ENCODE measurements at regions of chr1 and their contacts with region 1.

Region 1: DNA sequence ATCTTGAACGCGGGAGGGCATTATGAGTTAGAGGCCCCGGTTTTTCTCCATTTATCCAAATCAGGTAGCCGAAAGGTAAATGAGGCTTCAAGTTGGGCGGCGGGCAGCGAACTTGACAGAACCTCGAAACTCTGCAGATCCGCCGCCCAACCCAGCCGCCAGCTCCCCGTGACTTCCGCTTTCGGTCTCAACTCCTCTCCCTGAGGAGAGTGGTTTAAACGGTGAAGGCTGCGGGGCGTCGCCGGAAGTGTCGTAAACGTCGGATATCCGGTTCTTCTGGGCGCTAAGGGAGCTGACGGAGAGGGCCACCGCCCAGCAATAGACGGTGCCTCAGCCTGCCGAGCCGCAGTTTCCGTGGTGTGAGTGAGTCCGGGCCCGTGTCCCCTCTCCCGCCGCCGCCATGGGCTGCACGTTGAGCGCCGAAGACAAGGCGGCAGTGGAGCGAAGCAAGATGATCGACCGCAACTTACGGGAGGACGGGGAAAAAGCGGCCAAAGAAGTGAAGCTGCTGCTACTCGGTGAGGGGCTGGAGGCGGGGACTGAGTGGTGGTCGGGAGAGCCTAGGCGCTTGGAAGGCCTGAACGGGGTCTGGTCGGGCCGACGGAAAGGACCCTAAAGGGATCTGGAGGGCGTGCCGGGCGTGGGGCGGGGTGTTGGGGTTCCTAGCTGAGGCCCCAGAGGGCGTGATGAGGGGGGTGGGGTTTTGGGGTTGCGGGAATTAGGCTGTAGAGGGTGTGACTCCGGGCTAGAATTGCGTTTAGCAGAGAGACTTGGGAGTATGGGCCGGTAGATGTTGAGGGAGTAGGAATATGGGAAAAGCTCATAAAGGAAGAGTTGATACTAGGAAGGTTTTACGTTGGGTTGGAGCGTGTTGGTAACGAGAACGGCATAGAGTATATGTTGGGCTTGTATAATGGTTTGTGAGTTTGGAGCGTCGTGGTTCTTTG is at the start of gene GNAI3:
- DNase-seq: peak; percentile 97
- ATAC-seq: peak; percentile 98 to 99
- total RNA-seq, gene GNAI3: 3.4 to 4.6 TPM

Region 2: GRCh38 chr1:108816049-108816893 is 732.3 kb before region 1 on chr1:
- intact Hi-C with region 1: no loop called
- DNase-seq: peak; percentile 74
- ATAC-seq: peak; percentile 84 to 91

Region 3: GRCh38 chr1:109620841-109621286 is 72.3 kb after region 1 on chr1:
- intact Hi-C with region 1: loop called (anchors 2 to 5 kb)
- DNase-seq: peak; percentile 98
- ATAC-seq: peak; percentile 82 to 85

Region 4: DNA sequence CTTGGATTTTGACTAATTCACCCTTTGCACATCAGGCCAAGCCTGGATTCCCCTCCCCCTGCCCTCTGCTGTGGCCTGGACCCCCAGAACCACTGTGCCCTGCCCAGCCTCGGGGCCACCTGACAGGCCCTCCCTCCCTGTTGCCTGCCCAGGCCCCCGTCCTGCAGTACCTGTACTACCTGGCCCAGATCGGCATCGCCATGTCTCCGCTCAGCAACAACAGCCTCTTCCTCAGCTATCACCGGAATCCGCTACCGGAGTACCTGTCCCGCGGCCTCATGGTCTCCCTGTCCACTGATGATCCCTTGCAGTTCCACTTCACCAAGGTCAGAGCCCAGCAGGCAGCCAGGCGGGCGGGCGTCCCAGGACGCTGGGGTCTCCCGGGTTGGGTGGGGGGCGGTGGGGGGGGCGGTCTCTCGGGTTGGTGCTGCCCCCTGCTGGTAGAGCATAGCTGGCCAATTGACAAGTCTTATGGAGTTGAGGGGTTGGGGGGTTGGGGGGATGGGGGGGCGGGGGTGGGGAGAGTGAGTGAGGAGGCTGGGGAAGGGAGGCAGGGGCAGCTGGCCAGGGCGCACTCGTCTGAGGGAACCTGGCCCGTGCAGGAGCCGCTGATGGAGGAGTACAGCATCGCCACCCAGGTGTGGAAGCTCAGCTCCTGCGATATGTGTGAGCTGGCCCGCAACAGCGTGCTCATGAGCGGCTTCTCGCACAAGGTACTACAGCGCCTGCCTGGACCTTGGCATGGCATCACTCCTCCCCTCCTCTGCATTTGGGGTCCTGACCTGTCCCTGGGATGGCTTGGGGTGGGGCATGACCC is 81.7 kb after region 1 on chr1:
- intact Hi-C with region 1: loop called (anchors 1 to 5 kb)
- DNase-seq: peak; percentile 29
- ATAC-seq: no peak

Region 5: GRCh38 chr1:109667452-109668122 is 119.0 kb after region 1 on chr1 and contains the start of gene GSTM2:
- intact Hi-C with region 1: no loop called
- DNase-seq: peak; percentile 95
- ATAC-seq: peak; percentile 100
- total RNA-seq, gene GSTM2: 36.7 to 44.4 TPM

Region 6: DNA sequence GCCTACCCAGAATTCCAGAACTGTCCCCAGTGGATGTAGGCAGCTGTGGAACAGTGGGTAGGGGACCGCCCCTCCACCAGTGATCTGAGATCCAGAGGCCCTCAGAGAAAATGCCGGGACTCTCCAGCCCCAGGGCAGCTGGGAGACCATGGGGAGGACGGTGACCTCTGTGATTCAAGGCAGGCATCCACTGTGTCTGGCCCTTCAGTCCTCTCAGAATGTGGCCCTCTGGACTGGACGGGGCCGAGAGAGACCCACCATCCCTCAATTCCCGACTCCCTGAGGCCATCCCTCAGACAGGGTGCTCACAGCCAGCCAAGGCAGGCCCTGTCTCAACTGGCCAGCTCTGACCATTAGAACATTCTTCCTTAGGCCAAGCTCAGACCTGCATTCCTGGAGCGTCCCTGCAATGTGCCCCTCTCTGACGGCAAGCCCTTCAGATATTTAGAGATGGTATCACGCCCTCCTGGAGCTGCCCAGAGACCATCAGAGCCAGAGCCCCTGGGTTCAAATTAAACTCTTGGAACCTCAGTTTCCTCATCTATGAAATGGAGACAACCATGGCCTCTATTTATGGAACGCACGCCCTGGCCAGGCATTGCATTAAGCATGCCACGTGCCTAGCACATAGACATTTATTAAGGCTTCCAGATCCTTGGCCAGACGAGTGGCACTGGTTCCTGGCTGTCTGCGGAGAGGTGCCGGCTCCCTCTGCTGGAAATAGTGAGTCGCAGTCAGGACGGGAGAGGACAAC is 224.7 kb after region 1 on chr1:
- intact Hi-C with region 1: loop called (anchors 2 to 5 kb)
- DNase-seq: peak; percentile 85
- ATAC-seq: peak; percentile 85 to 88

Region 7: GRCh38 chr1:110872745-110873720 is 1324.4 kb after region 1 on chr1 and contains the start of gene CD53:
- intact Hi-C with region 1: no loop called
- DNase-seq: no peak
- ATAC-seq: peak; percentile 67 to 68
- total RNA-seq, gene CD53: 19.8 to 37.8 TPM